ENCODE measurements at regions of chr1 and their contacts with region 1.

Region 1: DNA sequence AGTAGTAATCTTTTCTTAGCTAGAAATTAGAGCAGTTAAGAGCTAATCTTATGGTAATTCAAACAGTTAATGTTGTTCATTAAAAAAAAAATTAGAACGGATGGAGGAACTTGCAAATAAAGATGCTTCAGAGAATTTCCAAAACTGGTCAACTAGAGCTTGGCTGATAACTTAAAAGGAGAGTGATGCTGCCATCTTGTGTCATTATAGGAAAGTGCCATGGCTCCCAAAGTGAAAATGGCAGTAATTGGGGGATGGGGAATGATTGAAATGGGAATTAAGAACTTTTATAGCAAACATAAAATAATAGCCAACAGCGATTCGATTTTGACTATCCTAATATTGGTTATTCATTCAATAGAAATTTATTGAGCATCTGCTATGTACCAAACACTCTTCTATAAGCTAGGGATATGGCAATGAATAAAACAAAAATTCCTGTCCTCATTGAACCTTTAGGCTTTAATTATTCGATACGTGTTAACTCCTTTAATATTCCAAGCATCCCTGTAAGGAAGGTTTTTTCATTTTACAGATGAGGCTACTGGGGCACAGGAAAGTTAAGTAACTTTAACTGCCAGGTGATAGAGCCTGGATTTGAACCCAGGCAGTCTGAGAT is 5.7 kb upstream of the PLPP3 start:
- DNase-seq: peak; percentile 24 to 59 (median 46)
- H3K4me3 ChIP-seq: no peak overlapping the region
- H3K4me3 Mint-ChIP-seq: no peak overlapping the region
- H3K27ac ChIP-seq: no peak overlapping the region
- H3K27ac Mint-ChIP-seq: no peak overlapping the region
- H3K4me1 ChIP-seq: no peaks in the 10 kb centered on the region
- H3K4me1 Mint-ChIP-seq: peaks cover 2% of the 10 kb centered on the region
- H3K27me3 ChIP-seq: peaks cover 0 to 6% of the 10 kb centered on the region in 2 donors
- H3K27me3 Mint-ChIP-seq: peaks cover 4 to 10% (median 8%) of the 10 kb centered on the region in 3 donors
- CTCF ChIP-seq: peak; percentile 88

Region 2: DNA sequence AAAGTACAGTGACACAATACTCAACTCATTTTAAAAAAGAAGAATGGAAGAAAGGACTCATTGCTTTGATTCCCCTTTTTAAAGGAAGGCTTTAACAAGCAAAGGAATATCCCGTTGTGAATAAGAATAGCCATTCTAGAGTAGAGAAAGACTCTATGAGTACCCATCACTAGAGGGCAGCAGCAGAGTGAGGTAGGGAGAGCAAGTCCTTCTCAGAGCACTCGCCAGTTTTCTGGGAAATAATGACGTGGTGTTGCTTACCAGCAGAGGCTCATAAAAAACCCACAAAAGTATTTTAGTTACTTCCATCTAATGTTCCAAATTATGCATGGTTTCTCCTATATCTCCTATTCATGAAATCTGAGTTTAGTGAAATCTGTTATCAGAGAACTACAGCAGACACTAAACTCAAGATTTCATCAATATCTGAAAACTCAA is 1444.5 kb before region 1 on chr1:
- intact Hi-C with region 1: loop called in 1 of 2 experiments (anchors 10 kb)
- DNase-seq: peak; percentile 38 to 65 (median 62)
- H3K4me3 ChIP-seq: no peak overlapping the region
- H3K4me3 Mint-ChIP-seq: no peak overlapping the region
- H3K27ac ChIP-seq: no peak overlapping the region
- H3K27ac Mint-ChIP-seq: no peak overlapping the region
- H3K4me1 ChIP-seq: no peaks in the 10 kb centered on the region
- H3K4me1 Mint-ChIP-seq: peaks cover 6% of the 10 kb centered on the region
- H3K27me3 ChIP-seq: no peaks in the 10 kb centered on the region
- H3K27me3 Mint-ChIP-seq: peaks cover 0 to 1% (median 0%) of the 10 kb centered on the region in 3 donors
- CTCF ChIP-seq: peak; percentile 88

Region 3: DNA sequence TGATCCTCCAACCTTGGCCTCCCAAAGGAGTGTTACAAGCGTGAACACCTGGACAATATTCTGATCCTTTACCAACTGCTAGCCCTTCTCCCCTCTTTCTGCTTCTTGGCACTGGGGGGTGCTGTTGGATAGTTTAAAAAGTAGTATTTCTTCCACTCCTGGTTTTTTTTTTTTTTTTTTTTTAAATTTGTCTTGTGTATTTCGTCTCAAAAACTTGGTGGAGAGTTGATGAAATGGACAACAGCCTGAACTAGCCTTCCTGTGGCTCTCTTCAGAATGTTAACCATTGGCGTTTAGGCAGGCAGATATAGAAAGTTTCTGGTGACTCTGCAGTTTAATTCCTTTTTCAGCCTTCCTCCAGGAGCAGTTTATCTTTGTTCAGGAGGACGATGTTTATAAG is 1300.2 kb before region 1 on chr1:
- intact Hi-C with region 1: loop called (anchors 10 kb)
- DNase-seq: no peak
- H3K4me3 ChIP-seq: no peak overlapping the region
- H3K4me3 Mint-ChIP-seq: no peak overlapping the region
- H3K27ac ChIP-seq: no peak overlapping the region
- H3K27ac Mint-ChIP-seq: no peak overlapping the region
- H3K4me1 ChIP-seq: no peaks in the 10 kb centered on the region
- H3K4me1 Mint-ChIP-seq: peaks cover 3% of the 10 kb centered on the region
- H3K27me3 ChIP-seq: no peaks in the 10 kb centered on the region
- H3K27me3 Mint-ChIP-seq: peaks cover 0 to 5% (median 2%) of the 10 kb centered on the region in 3 donors
- CTCF ChIP-seq: peak; percentile 42

Region 4: DNA sequence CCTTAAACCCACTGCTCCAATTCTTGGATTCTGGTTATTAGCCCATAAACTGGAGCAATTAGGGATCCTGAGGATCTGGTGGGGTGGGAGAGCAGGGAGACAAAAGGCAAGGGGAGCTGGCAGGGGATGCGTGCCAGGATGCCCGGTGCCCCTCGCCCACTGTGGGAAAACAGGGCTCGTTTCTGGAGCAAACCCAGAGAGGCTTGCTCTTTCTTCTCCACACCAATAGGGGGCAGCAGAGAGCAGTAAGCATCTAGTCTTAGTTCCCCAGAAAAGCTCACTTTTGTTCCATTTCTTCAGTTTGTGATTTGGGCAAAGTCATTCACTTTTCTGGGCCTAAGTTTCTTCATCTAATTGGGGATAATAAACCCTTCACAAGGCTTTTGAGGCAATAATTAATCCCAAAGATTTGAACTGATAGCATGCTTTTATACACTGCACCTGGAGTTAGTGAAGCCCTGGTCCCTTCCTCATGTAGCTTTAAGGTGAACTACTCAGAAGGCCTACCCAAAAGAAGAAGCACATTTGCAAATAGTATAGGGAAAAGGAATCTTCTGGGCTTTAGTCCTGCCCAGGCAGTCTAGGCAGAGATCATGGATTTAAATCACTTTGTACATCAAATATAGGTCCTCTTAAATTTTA is 1209.3 kb before region 1 on chr1:
- intact Hi-C with region 1: loop called (anchors 2 to 10 kb)
- DNase-seq: peak; percentile 16 to 32 (median 28)
- H3K4me3 ChIP-seq: no peak overlapping the region
- H3K4me3 Mint-ChIP-seq: no peak overlapping the region
- H3K27ac ChIP-seq: no peak overlapping the region
- H3K27ac Mint-ChIP-seq: no peak overlapping the region
- H3K4me1 ChIP-seq: no peaks in the 10 kb centered on the region
- H3K4me1 Mint-ChIP-seq: peaks cover 2% of the 10 kb centered on the region
- H3K27me3 ChIP-seq: no peaks in the 10 kb centered on the region
- H3K27me3 Mint-ChIP-seq: peaks cover 1 to 2% (median 2%) of the 10 kb centered on the region in 3 donors
- CTCF ChIP-seq: peak; percentile 92

Region 5: GRCh38 chr1:56696663-56697062 is 111.6 kb after region 1 on chr1:
- intact Hi-C with region 1: no loop called
- DNase-seq: no peak
- H3K4me3 ChIP-seq: no peak overlapping the region
- H3K4me3 Mint-ChIP-seq: no peak overlapping the region
- H3K27ac ChIP-seq: no peak overlapping the region
- H3K27ac Mint-ChIP-seq: no peak overlapping the region
- H3K4me1 ChIP-seq: no peaks in the 10 kb centered on the region
- H3K4me1 Mint-ChIP-seq: no peaks in the 10 kb centered on the region
- H3K27me3 ChIP-seq: no peaks in the 10 kb centered on the region
- H3K27me3 Mint-ChIP-seq: no peaks in the 10 kb centered on the region
- CTCF ChIP-seq: no peak